ENCODE measurements at regions of chr3 and their contacts with region 1.

Region 1: DNA sequence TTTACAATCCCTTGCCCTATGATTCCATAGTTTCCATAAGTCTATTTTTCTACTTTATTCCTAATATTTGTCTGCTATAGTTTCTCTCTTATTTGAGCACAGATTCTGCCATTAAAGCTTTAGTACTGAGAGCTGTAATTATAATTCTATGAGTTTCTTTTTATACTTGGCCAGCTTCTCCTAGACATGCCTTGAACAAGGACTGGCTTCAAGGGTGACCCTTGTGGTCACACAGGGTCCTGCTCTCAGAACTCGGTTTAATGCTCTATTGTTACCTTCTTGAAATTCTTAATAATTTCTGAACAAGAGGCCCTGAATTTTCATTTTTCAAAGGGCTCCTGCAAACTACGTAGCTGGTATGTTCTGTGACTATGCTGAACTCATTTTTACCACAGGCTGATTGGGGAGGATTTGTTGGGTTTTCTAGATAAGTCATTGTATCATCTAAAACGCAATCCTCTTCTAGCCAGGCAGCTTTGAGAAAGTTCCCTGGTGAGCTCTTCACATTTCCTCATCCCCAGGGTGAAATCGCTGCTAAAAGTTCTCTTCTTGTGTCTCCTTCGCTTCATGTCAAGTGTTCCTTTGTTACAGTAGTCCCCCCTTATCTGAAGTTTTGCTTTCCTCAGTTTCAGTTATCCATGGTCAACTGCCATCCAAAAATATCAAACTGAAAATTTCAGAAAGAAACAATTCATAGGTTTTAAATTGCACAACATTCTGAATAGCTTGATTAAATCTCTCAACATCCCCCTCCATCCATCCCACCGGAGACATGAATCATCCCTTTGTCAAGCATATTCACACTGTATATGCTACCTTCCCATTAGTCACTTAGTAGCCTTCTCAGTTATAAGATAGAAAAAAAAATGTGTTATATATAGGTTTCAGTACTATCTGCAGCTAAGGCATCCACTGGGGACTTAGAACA is 12.6 kb upstream of the PLCL2 start:
- DNase-seq: no peak
- ATAC-seq: no peak
- H3K4me3 ChIP-seq: no peak overlapping the region
- H3K27ac ChIP-seq: no peak overlapping the region
- H3K4me1 ChIP-seq: no peaks in the 10 kb centered on the region
- H3K27me3 ChIP-seq: no peaks in the 10 kb centered on the region
- CTCF ChIP-seq: no peak
- POLR2A ChIP-seq: no peak

Region 2: DNA sequence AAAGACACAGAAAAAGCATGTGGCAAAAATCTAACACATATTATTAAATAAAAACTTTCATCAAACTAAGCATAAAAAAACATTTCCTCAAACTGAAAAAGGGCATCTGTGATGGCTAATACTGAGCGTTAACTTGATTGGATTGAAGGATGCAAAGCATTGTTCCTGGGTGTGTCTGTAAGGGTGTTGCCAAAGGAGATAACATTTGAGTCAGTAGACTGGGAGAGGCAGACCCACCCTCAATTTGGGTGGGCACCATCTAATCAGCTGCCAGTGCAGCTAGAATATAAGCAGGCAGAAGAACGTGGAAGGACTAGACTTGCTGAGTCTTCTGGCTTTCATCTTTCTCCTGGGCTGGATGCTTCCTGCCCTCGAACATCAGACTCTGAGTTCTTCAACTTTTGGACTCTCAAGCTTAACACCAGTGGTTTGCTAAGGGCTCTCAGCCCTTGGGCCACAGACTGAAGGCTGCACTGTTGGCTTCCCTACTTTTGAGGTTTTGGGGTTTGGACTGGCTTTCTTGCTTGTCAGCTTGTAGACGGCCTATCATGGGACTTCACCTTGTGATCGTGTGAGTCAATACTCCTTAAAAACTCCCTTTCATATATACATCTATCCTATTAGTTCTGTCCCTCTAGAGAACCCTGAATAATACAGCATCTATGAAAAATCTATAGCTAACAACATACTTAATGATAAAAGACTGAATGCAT is 312.4 kb before region 1 on chr3:
- intact Hi-C with region 1: no loop called
- DNase-seq: no peak
- ATAC-seq: no peak
- H3K4me3 ChIP-seq: no peak overlapping the region
- H3K27ac ChIP-seq: no peak overlapping the region
- H3K4me1 ChIP-seq: no peaks in the 10 kb centered on the region
- H3K27me3 ChIP-seq: no peaks in the 10 kb centered on the region
- CTCF ChIP-seq: no peak
- POLR2A ChIP-seq: no peak

Region 3: GRCh38 chr3:17023006-17023664 is 151.0 kb after region 1 on chr3:
- intact Hi-C with region 1: loop called (anchors 10 kb)
- DNase-seq: no peak
- ATAC-seq: no peak
- H3K4me3 ChIP-seq: no peak overlapping the region
- H3K27ac ChIP-seq: no peak overlapping the region
- H3K4me1 ChIP-seq: peaks cover 5% of the 10 kb centered on the region
- H3K27me3 ChIP-seq: no peaks in the 10 kb centered on the region
- CTCF ChIP-seq: no peak
- POLR2A ChIP-seq: no peak

Region 4: GRCh38 chr3:17602126-17602525 is 729.9 kb after region 1 on chr3:
- intact Hi-C with region 1: no loop called
- DNase-seq: no peak
- ATAC-seq: no peak
- H3K4me3 ChIP-seq: no peak overlapping the region
- H3K27ac ChIP-seq: no peak overlapping the region
- H3K4me1 ChIP-seq: no peaks in the 10 kb centered on the region
- H3K27me3 ChIP-seq: no peaks in the 10 kb centered on the region
- CTCF ChIP-seq: no peak
- POLR2A ChIP-seq: no peak

Measured in body of pancreas (tissue), 4 donors.